Activated CD4-positive, alpha-beta T cell treated with anti-CD3 and anti-CD28 coated beads for 36 hours (primary cell): ENCODE measurements at regions of chr3 and their contacts with region 1.

Region 1: GRCh38 chr3:178385280-178385952 is 150.8 kb upstream of the KCNMB2 start:
- DNase-seq: peak; percentile 13
- ATAC-seq: no peak
- H3K4me3 Mint-ChIP-seq: no peak overlapping the region
- H3K27ac Mint-ChIP-seq: no peak overlapping the region
- H3K4me1 Mint-ChIP-seq: no peaks in the 10 kb centered on the region
- H3K27me3 Mint-ChIP-seq: peaks cover 9% of the 10 kb centered on the region

Region 2: DNA sequence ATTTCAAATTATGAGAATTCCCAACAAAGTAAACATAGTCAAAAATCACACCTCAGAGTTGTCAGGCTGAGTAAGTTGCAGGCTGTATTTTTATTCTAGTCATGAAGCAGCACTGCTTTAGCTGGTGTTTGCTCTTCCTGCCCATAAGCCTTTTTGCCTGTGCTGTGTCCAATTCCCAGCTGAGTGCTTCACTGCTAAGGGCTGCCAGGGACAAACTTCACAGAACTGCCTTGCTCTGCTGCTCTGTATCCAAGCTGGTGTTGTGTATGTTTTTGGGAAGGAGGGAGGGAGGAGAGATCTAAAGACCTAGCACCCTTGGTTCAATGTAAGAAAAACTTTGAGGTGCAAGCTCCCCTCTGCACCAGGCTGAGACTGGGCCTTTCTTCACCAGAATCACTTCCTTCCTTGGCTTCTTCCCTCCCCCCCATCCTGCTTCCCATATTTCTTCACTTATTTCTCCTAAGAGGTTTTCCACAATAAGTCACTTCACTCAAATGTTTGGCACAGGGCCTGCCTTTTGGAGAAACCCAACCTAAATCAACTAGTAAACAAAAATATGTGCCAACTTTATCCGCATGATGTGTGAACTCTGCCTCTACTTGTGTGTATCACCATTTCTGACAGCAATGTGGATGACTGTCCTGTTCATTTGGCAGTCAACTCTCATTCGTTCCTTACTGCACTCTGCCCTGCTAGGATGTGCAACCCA is 1344.2 kb before region 1 on chr3:
- CTCF ChIA-PET with region 1: no interaction called
- POLR2A ChIA-PET with region 1: no interaction called
- intact Hi-C with region 1: loop called in 1 of 2 experiments (anchors 10 kb)
- DNase-seq: no peak
- ATAC-seq: no peak
- H3K4me3 Mint-ChIP-seq: no peak overlapping the region
- H3K27ac Mint-ChIP-seq: peak overlapping the region; percentile 9
- H3K4me1 Mint-ChIP-seq: peaks cover 31% of the 10 kb centered on the region
- H3K27me3 Mint-ChIP-seq: no peaks in the 10 kb centered on the region

Region 3: DNA sequence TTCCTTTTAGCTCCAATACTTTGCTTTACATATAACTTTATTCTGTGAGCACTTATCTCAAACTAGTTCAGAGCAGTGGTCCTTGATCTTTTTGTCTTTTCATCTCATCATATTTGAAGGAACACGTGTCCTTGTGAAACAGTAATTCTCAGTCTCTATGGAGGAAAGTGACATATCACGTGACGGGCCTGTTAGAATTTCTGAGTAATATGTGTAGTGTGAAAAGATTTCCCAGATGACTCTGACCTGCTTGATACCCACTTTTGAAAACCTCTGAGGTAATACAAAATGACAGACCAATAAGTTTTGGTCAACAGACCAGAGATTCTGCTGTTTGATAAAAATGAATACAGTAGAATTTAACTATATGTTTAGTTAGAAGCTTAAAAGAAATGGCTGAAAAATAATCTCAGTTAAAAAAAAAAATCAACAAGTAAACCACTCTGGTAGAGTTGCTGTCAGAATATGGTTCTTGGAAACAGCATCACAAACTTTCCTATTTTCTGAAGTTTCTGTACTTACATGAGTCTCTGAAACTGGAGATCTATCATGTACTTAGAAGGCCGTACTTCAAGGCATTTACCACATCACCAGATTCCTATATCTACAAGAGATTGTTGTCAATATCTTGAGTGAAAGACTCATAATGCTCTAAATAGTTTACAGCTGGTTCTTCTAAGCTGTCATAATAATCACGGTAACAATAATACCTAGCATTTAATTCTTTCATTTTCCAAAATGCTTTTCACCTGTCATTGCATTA is 598.0 kb before region 1 on chr3:
- CTCF ChIA-PET with region 1: no interaction called
- POLR2A ChIA-PET with region 1: no interaction called
- intact Hi-C with region 1: no loop called
- DNase-seq: peak; percentile 32
- ATAC-seq: peak; percentile 89
- H3K4me3 Mint-ChIP-seq: no peak overlapping the region
- H3K27ac Mint-ChIP-seq: peak overlapping the region; percentile 52
- H3K4me1 Mint-ChIP-seq: peaks cover 26% of the 10 kb centered on the region
- H3K27me3 Mint-ChIP-seq: no peaks in the 10 kb centered on the region

Region 4: GRCh38 chr3:178334239-178334638 is 51.2 kb before region 1 on chr3:
- CTCF ChIA-PET with region 1: no interaction called
- POLR2A ChIA-PET with region 1: no interaction called
- intact Hi-C with region 1: no loop called
- DNase-seq: no peak
- ATAC-seq: no peak
- H3K4me3 Mint-ChIP-seq: no peak overlapping the region
- H3K27ac Mint-ChIP-seq: no peak overlapping the region
- H3K4me1 Mint-ChIP-seq: no peaks in the 10 kb centered on the region
- H3K27me3 Mint-ChIP-seq: peaks cover 2% of the 10 kb centered on the region

Region 5: GRCh38 chr3:178352326-178353005 is 33.0 kb before region 1 on chr3:
- CTCF ChIA-PET with region 1: no interaction called
- POLR2A ChIA-PET with region 1: no interaction called
- intact Hi-C with region 1: no loop called
- DNase-seq: no peak
- ATAC-seq: no peak
- H3K4me3 Mint-ChIP-seq: no peak overlapping the region
- H3K27ac Mint-ChIP-seq: no peak overlapping the region
- H3K4me1 Mint-ChIP-seq: no peaks in the 10 kb centered on the region
- H3K27me3 Mint-ChIP-seq: peaks cover 3% of the 10 kb centered on the region